ENCODE measurements at regions of chr21 and their contacts with region 1.

Region 1: GRCh38 chr21:32940079-32941014 is 85.4 kb upstream of the OLIG2 start:
- DNase-seq: peak; percentile 52
- ATAC-seq: peak; percentile 51
- H3K4me3 Mint-ChIP-seq: no peak overlapping the region
- H3K27ac Mint-ChIP-seq: no peak overlapping the region
- H3K4me1 Mint-ChIP-seq: peaks cover 10% of the 10 kb centered on the region
- H3K27me3 Mint-ChIP-seq: no peaks in the 10 kb centered on the region
- CTCF ChIP-seq: peak; percentile 90

Region 2: DNA sequence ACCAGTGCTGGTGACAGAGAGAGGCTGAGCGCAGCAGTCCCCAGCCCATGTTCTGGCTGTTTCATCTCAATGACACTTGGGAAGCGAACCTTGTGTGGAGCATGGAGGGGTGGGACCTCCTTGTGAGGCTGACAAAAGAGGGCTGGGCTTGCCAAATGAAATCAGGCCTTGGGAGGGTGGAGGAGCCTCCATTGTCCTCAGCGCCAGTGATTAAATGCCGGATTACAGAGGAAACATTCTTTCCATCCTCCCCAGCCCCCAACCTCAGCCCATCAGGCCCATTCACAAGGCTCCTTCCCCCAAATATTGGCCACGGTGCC is 105.5 kb before region 1 on chr21:
- CTCF ChIA-PET with region 1: interaction called, 15 read pairs
- POLR2A ChIA-PET with region 1: no interaction called
- intact Hi-C with region 1: no loop called
- DNase-seq: no peak
- ATAC-seq: no peak
- H3K4me3 Mint-ChIP-seq: no peak overlapping the region
- H3K27ac Mint-ChIP-seq: no peak overlapping the region
- H3K4me1 Mint-ChIP-seq: no peaks in the 10 kb centered on the region
- H3K27me3 Mint-ChIP-seq: peaks cover 1% of the 10 kb centered on the region
- CTCF ChIP-seq: no peak

Region 3: DNA sequence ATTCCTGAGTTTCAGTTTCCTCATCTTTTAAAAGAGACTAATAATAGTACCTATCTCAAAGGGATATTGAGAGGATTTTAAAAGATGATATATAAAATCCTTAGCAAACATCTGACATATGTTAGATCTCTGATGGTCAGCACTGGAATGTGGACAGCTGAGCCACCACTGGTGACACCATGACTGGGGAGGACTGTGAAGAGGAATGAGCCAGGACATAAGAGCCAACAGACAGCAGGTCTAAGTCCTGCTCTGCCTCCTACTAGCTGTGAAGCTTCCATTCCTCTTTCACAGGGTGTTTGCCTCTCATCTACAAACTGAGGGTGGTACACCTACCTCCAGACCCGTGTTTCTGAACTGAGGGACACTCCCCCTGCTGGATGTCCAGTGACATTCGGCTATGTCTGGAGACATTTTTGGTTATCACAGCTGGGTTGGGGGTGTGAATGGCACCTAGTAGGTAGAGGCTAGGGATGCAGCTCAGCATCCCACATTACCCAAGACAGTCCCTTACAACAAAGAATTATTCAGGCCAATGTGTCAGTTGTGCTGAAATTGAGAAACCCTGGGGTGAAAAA is 23.7 kb before region 1 on chr21:
- CTCF ChIA-PET with region 1: interaction called, 31 read pairs
- POLR2A ChIA-PET with region 1: interaction called, 3 read pairs
- intact Hi-C with region 1: no loop called
- DNase-seq: peak; percentile 14
- ATAC-seq: peak; percentile 37
- H3K4me3 Mint-ChIP-seq: no peak overlapping the region
- H3K27ac Mint-ChIP-seq: no peak overlapping the region
- H3K4me1 Mint-ChIP-seq: peaks cover 30% of the 10 kb centered on the region
- H3K27me3 Mint-ChIP-seq: no peaks in the 10 kb centered on the region
- CTCF ChIP-seq: peak; percentile 47

Region 4: GRCh38 chr21:32921632-32922230 is 18.6 kb before region 1 on chr21:
- CTCF ChIA-PET with region 1: interaction called, 31 read pairs
- POLR2A ChIA-PET with region 1: interaction called, 3 read pairs
- intact Hi-C with region 1: no loop called
- DNase-seq: peak; percentile 67
- ATAC-seq: no peak
- H3K4me3 Mint-ChIP-seq: no peak overlapping the region
- H3K27ac Mint-ChIP-seq: no peak overlapping the region
- H3K4me1 Mint-ChIP-seq: peaks cover 4% of the 10 kb centered on the region
- H3K27me3 Mint-ChIP-seq: no peaks in the 10 kb centered on the region
- CTCF ChIP-seq: peak; percentile 67

Region 5: GRCh38 chr21:32958288-32959002 is 18.1 kb after region 1 on chr21:
- CTCF ChIA-PET with region 1: interaction called, 45 read pairs
- POLR2A ChIA-PET with region 1: no interaction called
- intact Hi-C with region 1: no loop called
- DNase-seq: no peak
- ATAC-seq: peak; percentile 20
- H3K4me3 Mint-ChIP-seq: no peak overlapping the region
- H3K27ac Mint-ChIP-seq: no peak overlapping the region
- H3K4me1 Mint-ChIP-seq: no peaks in the 10 kb centered on the region
- H3K27me3 Mint-ChIP-seq: peaks cover 32% of the 10 kb centered on the region
- CTCF ChIP-seq: no peak

Region 6: GRCh38 chr21:33007747-33008146 is 67.4 kb after region 1 on chr21:
- CTCF ChIA-PET with region 1: no interaction called
- POLR2A ChIA-PET with region 1: no interaction called
- intact Hi-C with region 1: no loop called
- DNase-seq: no peak
- ATAC-seq: no peak
- H3K4me3 Mint-ChIP-seq: no peak overlapping the region
- H3K27ac Mint-ChIP-seq: no peak overlapping the region
- H3K4me1 Mint-ChIP-seq: no peaks in the 10 kb centered on the region
- H3K27me3 Mint-ChIP-seq: peaks cover 6% of the 10 kb centered on the region
- CTCF ChIP-seq: no peak

Region 7: DNA sequence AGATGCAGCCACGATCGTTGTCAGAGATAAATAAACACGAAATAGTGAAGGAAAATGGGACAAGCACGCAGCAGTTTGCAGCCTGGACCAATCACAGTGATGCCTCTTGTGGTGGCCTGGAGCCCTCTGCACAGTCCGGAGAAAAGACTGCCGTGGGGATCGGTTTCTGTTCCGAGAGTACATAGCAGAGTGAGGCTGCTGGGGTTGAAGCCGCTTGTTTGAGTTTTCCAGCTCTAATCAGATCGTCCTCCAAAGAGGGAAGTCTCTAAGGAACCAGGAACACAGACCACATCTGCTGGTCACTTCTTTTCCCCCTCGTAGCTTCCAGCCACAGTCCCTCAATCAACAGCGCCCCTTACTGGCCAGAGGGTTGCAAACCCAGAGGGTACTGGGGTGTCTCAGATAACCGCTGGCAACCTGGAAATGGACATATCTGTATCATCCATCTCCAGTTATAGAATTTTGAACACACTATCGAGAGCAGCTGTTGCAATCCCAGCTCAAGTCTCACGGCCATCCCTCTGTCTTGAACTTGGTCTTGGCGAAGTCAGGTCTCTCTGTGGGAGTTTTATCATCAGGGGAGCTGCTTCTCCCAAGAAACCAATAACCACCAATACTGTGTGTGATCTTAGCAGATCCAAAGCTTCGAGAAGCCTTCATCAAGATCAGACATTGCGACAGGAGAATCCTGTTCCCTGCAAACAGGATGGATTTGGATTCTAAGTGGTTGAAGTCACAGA is 187.0 kb after region 1 on chr21:
- CTCF ChIA-PET with region 1: interaction called, 20 read pairs
- POLR2A ChIA-PET with region 1: no interaction called
- intact Hi-C with region 1: no loop called
- DNase-seq: peak; percentile 77
- ATAC-seq: peak; percentile 86
- H3K4me3 Mint-ChIP-seq: peak overlapping the region; percentile 60
- H3K27ac Mint-ChIP-seq: no peak overlapping the region
- H3K4me1 Mint-ChIP-seq: peaks cover 4% of the 10 kb centered on the region
- H3K27me3 Mint-ChIP-seq: peaks cover 23% of the 10 kb centered on the region
- CTCF ChIP-seq: peak; percentile 83